ENCODE measurements at regions of chr17 and their contacts with region 1.

Region 1: DNA sequence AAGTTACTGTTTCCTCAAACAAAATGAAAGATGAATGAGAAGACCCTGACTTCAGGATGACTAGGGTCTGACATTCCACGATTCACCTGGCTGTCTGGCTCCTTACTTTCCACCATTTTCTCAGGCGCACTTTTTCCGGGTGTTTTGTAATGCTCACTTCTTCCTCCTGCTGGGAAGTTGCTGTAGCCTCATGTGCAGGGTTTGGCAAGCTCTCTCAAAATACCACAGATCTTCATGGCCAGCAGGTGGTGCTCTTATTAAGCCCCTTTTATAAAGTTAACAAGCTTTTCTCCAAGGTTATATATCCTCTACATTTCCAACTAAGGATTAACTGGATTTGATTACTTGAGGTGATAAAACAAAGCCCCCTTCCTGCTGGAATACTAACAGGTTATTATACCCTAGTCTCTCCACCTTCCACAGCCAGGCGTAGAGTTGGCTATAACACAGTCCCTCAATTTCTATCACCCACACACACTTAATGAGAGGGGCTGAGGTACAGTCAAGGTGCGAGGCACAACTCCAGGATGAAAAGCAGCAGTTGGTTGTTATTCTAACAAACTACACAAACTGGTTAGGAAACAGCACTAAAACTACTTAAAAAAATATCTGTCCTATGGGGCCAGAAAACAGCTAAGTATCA is 45.4 kb downstream of the STH start:
- DNase-seq: peak in 1 of 2 donors; percentile 72
- ATAC-seq: peak; percentile 92
- H3K4me3 ChIP-seq: no peak overlapping the region
- H3K27ac ChIP-seq: no peak overlapping the region
- H3K4me1 ChIP-seq: no peaks in the 10 kb centered on the region
- H3K27me3 ChIP-seq: no peaks in the 10 kb centered on the region

Region 2: GRCh38 chr17:46097497-46097896 is 53.1 kb after region 1 on chr17:
- intact Hi-C with region 1: no loop called
- DNase-seq: no peak
- ATAC-seq: no peak
- H3K4me3 ChIP-seq: no peak overlapping the region
- H3K27ac ChIP-seq: no peak overlapping the region
- H3K4me1 ChIP-seq: no peaks in the 10 kb centered on the region
- H3K27me3 ChIP-seq: no peaks in the 10 kb centered on the region

Region 3: GRCh38 chr17:46193626-46194392 is 149.4 kb after region 1 on chr17:
- intact Hi-C with region 1: loop called (anchors 5 kb)
- DNase-seq: peak; percentile 98 to 100
- ATAC-seq: peak; percentile 96
- H3K4me3 ChIP-seq: peak overlapping the region; percentile 77 to 86
- H3K27ac ChIP-seq: peak overlapping the region in 1 of 2 donors; percentile 87
- H3K4me1 ChIP-seq: peaks cover 0 to 5% of the 10 kb centered on the region in 2 donors
- H3K27me3 ChIP-seq: no peaks in the 10 kb centered on the region

Region 4: GRCh38 chr17:46212634-46213435 is 168.4 kb after region 1 on chr17:
- intact Hi-C with region 1: loop called (anchors 1 to 5 kb)
- DNase-seq: no peak
- ATAC-seq: peak; percentile 88
- H3K4me3 ChIP-seq: no peak overlapping the region
- H3K27ac ChIP-seq: no peak overlapping the region
- H3K4me1 ChIP-seq: no peaks in the 10 kb centered on the region
- H3K27me3 ChIP-seq: no peaks in the 10 kb centered on the region